Right ventricle myocardium superior (tissue), 1 donor: ENCODE measurements at regions of chr11 and their contacts with region 1.

Region 1: GRCh38 chr11:129230006-129230405 is 37.9 kb upstream of the ARHGAP32 start:
- DNase-seq: no peak
- ATAC-seq: no peak

Region 2: GRCh38 chr11:129323896-129324512 is 94.0 kb after region 1 on chr11:
- intact Hi-C with region 1: loop called (anchors 10 kb)
- DNase-seq: no peak
- ATAC-seq: peak; percentile 92